ENCODE measurements at regions of chr20 and their contacts with region 1.

Region 1: GRCh38 chr20:53493311-53493864 is 100.3 kb downstream of the ZNF217 start:
- DNase-seq: no peak
- ATAC-seq: no peak
- H3K4me3 ChIP-seq: no peak overlapping the region
- H3K27ac ChIP-seq: no peak overlapping the region
- H3K4me1 ChIP-seq: no peaks in the 10 kb centered on the region
- H3K27me3 ChIP-seq: peaks cover 14% of the 10 kb centered on the region in 2 experiments; a peak in 4 of 5 replicates
- CTCF ChIP-seq: no peak
- EP300 ChIP-seq: no peak
- POLR2A ChIP-seq: no peak
- RAD21 ChIP-seq: no peak

Region 2: DNA sequence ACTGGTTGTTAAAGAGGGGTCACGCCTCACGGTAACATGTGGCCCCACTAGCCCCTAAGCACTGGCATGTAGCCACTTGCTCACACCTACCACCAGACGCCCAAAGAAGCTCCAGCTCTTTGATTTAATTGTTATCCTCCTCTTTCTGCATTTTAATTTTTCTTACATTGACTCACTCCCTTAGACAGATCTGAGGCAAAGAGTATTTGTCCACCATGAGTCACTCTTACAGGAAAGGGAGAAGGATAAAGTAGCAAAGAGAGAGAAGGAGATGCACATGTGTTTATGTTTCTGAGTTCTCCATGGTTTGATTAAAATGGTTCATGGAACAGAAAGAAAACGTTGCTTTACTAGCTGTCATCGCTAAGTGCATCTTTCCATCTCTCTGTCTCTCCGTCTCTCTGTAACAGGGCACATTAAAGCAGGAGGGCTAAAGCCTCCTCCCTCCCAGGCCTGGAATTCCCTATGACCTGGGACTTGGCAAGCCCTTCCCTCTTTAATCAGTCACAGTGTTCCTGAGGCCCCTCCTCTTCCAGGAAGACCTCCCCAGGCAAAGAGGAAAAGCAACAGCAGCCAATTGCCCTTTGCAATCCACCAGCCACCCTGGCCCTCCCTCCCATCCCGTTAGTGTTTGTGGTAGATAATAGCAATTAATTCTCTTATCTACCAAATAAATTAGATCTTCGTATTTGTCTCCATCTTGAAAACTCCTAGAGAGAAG is 634.1 kb before region 1 on chr20:
- CTCF ChIA-PET with region 1: no interaction called
- POLR2A ChIA-PET with region 1: no interaction called
- in situ Hi-C with region 1: no loop called
- intact Hi-C with region 1: no loop called
- DNase-seq: no peak
- ATAC-seq: no peak
- H3K4me3 ChIP-seq: no peak overlapping the region
- H3K27ac ChIP-seq: no peak overlapping the region
- H3K4me1 ChIP-seq: no peaks in the 10 kb centered on the region
- H3K27me3 ChIP-seq: no peaks in the 10 kb centered on the region
- CTCF ChIP-seq: no peak
- EP300 ChIP-seq: no peak
- POLR2A ChIP-seq: no peak
- RAD21 ChIP-seq: no peak

Region 3: DNA sequence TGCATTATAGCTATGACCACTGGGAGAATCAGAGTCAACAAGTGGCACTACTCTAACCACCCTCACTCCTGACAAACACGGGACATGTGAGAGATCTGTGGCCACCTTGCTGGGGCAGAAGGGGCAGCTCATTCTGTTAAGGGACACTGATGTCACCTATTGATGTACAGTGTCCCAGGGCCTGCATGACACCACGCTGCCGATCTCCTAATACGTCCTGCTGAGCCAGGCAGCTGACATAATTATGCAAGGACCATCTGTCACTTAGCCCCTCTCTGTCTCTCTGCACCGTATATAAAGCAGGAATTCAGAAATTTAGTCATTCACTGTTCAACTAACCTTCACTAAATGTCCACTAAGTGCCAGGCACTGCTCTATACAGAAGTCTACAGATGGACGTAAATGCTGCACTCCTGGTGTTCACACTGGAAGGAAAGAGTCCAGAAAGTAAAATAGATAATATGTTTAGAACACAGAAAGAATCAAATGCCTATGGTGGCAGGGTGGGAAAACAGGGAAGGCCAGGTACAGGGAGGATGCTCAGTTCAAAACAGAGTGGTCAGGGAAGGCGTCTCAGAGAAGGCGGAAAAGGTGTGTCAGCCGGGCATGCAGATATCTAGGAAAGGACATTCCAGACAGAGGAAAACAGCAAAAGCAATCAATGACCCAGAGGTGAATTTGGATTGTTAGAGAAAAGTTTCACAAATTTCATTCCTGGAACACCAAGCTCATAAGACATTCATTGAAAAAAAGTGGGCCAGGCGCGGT is 73.5 kb before region 1 on chr20:
- CTCF ChIA-PET with region 1: no interaction called
- POLR2A ChIA-PET with region 1: no interaction called
- in situ Hi-C with region 1: no loop called
- intact Hi-C with region 1: loop called (anchors 5 kb)
- DNase-seq: no peak
- ATAC-seq: no peak
- H3K4me3 ChIP-seq: no peak overlapping the region
- H3K27ac ChIP-seq: no peak overlapping the region
- H3K4me1 ChIP-seq: peaks cover 0 to 4% of the 10 kb centered on the region in 2 experiments; a peak in 1 of 5 replicates
- H3K27me3 ChIP-seq: peaks cover 7 to 39% of the 10 kb centered on the region in 2 experiments
- CTCF ChIP-seq: no peak
- EP300 ChIP-seq: no peak
- POLR2A ChIP-seq: no peak
- RAD21 ChIP-seq: no peak

Measured in K562 (cell line).